Colonic mucosa (tissue), 4 donors: ENCODE measurements at regions of chr12 and their contacts with region 1.

Region 1: GRCh38 chr12:93979189-93979588 is 169.2 kb upstream of the PLXNC1 start:
- DNase-seq: peak; percentile 36
- H3K4me3 ChIP-seq: no peak overlapping the region
- H3K27ac ChIP-seq: no peak overlapping the region
- H3K4me1 ChIP-seq: no peaks in the 10 kb centered on the region
- H3K27me3 ChIP-seq: no peaks in the 10 kb centered on the region
- CTCF ChIP-seq: peak; percentile 47

Region 2: GRCh38 chr12:93526786-93527428 is 452.3 kb before region 1 on chr12:
- intact Hi-C with region 1: loop called (anchors 10 kb)
- DNase-seq: no peak
- H3K4me3 ChIP-seq: no peak overlapping the region
- H3K27ac ChIP-seq: no peak overlapping the region
- H3K4me1 ChIP-seq: no peaks in the 10 kb centered on the region
- H3K27me3 ChIP-seq: no peaks in the 10 kb centered on the region
- CTCF ChIP-seq: no peak

Region 3: DNA sequence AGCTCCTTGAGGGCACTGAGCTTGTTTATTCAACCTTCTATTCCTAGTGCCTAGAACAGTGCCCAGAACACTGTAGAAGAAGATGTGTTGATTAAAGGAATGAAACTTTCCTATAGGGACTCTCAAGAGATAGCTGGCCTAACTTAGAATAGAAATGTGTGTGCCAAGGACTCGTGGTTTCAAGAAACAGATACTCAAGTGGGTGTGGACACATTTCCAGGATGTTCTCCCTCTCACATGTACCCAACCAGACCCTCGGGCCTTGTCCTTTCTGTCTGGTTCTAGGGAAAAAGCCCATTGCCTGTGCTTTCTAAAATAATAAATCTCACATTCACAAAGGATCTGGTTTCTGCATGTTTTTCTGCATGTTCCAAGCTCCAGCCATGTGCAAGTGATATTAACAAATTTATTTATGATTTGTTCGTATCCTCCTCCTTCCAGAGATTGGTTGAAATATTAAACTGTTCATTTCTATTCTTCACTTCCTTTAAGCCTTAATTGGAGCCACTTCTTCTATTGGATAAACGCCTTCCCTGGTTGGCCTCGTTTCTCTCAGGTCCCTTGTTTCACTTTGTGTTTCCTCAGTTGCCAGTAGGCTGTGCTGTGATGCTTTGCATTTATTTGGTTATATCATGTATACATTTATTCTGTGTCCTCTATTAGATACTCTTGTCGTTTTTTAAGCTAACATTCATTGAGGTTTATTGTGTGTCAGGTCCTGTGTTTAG is 212.2 kb before region 1 on chr12:
- intact Hi-C with region 1: loop called (anchors 10 kb)
- DNase-seq: peak; percentile 40
- H3K4me3 ChIP-seq: no peak overlapping the region
- H3K27ac ChIP-seq: peak overlapping the region; percentile 6
- H3K4me1 ChIP-seq: no peaks in the 10 kb centered on the region
- H3K27me3 ChIP-seq: no peaks in the 10 kb centered on the region
- CTCF ChIP-seq: peak; percentile 50

Region 4: GRCh38 chr12:93918262-93918661 is 60.9 kb before region 1 on chr12:
- intact Hi-C with region 1: no loop called
- DNase-seq: no peak
- H3K4me3 ChIP-seq: no peak overlapping the region
- H3K27ac ChIP-seq: no peak overlapping the region
- H3K4me1 ChIP-seq: no peaks in the 10 kb centered on the region
- H3K27me3 ChIP-seq: no peaks in the 10 kb centered on the region
- CTCF ChIP-seq: no peak

Region 5: DNA sequence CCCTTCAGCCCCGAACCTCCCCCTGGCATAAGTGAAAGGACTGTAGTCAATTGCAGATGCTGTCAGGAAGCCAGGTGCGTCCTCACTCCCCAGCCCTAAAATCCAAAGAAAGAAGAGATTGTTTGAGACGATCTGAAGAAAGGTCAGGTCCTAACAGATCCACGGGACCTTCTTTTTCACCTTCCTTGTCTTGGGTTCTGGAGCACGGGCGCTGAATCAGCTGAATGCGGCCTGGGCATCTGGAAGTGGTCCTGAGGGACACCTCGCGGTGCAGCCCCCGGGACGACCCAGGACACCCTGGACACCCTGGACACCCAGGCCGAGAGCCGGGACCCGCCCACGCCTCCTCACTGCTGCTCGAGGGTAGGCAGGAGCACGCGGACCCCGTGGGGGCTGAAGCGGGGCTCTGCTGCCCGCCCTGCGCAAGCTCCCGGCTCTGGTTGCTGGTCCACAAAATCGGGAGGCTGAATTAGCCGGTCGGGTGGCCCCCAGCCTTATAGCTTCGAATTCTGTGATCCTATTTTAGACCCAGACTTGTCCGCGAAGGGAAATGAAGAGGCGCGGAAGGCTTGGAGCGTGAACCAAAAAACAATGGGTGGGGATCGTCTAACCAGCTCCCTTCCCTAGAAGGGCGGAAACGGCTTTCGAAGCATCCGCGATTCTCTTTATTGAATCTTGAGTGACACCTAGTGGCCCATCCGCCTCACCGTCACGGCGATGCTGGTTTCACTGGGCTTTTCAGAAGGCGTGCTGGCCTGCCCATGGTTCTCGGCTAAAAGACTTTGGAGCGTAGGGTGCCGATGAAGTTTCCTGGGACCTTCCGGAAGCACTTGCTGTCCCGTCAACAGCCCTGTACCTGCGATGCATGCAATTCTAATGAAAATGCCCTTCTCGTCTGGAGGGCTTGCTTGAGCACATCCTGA is 122.8 kb after region 1 on chr12:
- intact Hi-C with region 1: loop called (anchors 5 kb)
- DNase-seq: peak; percentile 91
- H3K4me3 ChIP-seq: peak overlapping the region; percentile 53
- H3K27ac ChIP-seq: no peak overlapping the region
- H3K4me1 ChIP-seq: no peaks in the 10 kb centered on the region
- H3K27me3 ChIP-seq: no peaks in the 10 kb centered on the region
- CTCF ChIP-seq: peak; percentile 75